ENCODE measurements at regions of chr2 and their contacts with region 1.

Region 1: DNA sequence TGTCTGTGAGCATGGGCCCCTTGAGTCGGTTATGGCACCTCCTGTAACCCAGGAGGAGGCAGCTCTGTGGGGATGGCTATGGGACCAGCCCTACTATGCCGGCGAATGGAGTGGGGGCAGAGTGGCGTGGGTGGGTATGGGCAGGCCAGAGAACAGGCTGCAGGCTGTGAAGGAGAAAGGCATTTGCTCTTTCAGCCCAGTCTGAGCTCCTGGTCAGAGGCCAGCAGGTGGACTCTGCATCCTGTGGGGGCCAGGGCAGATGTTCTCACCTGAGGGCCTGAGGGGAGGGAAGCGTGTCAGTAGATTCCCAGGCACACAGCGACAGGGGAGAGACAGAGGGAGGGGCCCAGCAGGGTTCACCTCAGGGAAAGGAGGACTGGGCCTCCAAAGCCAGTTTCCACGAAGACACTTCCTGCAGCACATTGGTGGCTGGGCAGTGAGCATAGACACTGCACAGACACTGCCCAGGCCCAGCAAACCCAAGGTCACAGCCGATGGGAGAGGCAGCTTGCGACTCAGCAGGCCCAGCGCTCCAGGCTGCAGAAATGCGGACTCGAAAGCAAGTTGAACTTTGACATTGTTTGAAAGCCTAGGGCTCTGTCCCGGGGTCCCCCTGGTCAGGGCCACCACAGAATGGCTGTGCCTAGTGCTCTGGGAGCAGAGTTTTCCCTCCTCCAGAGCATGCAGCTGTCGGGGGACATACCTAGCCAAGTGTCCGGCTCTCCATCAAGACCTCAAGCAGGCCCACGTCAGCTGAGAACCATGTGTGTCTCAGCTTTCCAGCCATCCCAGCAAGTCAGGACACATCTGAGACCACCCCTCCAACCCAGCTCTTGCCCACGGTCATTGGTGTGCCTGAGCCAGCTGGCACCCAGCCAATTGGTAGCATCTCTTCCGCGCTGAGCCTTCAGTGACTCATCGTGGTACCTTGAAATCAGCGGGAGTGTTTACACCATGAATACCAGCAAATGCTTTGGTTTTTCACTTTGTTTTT is 53.8 kb downstream of the TGOLN2 start:
- DNase-seq: peak; percentile 96
- H3K4me3 ChIP-seq: no peak overlapping the region
- H3K27ac ChIP-seq: peak overlapping the region; percentile 23
- H3K4me1 ChIP-seq: peaks cover 49% of the 10 kb centered on the region
- H3K27me3 ChIP-seq: no peaks in the 10 kb centered on the region
- CTCF ChIP-seq: no peak

Region 2: DNA sequence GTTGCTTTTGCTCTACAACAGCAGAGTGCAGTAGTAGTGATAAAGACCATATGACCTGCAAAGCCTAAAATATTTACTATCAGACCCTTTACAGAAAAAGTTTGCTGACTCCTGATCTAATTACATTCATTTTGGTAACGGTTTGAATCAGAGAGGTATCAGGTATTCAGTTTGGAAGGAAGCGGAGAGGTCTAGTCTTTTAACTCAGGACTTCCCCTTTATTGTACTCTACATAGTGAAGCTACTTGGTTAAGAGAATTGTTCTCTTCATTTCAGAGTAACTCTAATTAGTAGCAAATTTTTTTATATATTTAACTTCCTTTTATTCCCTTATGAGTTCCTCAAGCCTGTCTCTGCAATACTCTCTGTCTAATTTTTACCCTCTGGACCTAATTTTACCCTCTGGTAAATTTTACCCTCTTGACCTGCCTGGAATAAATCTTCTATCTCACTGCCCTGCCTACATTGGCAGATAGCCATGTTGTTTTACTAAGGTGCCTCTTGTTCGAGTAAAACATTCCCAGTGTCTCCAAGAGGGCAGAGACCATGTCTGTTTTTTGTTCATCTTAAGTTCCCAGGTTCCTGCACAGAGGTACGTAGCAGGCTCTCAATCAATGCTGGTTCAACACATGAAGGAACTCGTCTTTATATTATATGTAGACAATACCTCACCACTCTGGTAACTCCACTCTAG is 587.1 kb before region 1 on chr2:
- CTCF ChIA-PET with region 1: no interaction called
- dilution Hi-C with region 1: no loop called
- in situ Hi-C with region 1: no loop called
- intact Hi-C with region 1: no loop called
- DNase-seq: no peak
- H3K4me3 ChIP-seq: no peak overlapping the region
- H3K27ac ChIP-seq: no peak overlapping the region
- H3K4me1 ChIP-seq: no peaks in the 10 kb centered on the region
- H3K27me3 ChIP-seq: peaks cover 5% of the 10 kb centered on the region
- CTCF ChIP-seq: no peak

Region 3: GRCh38 chr2:85066874-85067351 is 207.1 kb before region 1 on chr2:
- CTCF ChIA-PET with region 1: no interaction called
- dilution Hi-C with region 1: loop called (anchors 25 kb)
- in situ Hi-C with region 1: no loop called
- intact Hi-C with region 1: no loop called
- DNase-seq: peak; percentile 40
- H3K4me3 ChIP-seq: no peak overlapping the region
- H3K27ac ChIP-seq: no peak overlapping the region
- H3K4me1 ChIP-seq: peaks cover 5% of the 10 kb centered on the region
- H3K27me3 ChIP-seq: no peaks in the 10 kb centered on the region
- CTCF ChIP-seq: peak; percentile 74 to 88

Region 4: GRCh38 chr2:85095094-85095493 is 178.9 kb before region 1 on chr2:
- CTCF ChIA-PET with region 1: interaction called, 17 read pairs
- dilution Hi-C with region 1: no loop called
- in situ Hi-C with region 1: no loop called
- intact Hi-C with region 1: no loop called
- DNase-seq: no peak
- H3K4me3 ChIP-seq: no peak overlapping the region
- H3K27ac ChIP-seq: no peak overlapping the region
- H3K4me1 ChIP-seq: no peaks in the 10 kb centered on the region
- H3K27me3 ChIP-seq: no peaks in the 10 kb centered on the region
- CTCF ChIP-seq: no peak

Region 5: DNA sequence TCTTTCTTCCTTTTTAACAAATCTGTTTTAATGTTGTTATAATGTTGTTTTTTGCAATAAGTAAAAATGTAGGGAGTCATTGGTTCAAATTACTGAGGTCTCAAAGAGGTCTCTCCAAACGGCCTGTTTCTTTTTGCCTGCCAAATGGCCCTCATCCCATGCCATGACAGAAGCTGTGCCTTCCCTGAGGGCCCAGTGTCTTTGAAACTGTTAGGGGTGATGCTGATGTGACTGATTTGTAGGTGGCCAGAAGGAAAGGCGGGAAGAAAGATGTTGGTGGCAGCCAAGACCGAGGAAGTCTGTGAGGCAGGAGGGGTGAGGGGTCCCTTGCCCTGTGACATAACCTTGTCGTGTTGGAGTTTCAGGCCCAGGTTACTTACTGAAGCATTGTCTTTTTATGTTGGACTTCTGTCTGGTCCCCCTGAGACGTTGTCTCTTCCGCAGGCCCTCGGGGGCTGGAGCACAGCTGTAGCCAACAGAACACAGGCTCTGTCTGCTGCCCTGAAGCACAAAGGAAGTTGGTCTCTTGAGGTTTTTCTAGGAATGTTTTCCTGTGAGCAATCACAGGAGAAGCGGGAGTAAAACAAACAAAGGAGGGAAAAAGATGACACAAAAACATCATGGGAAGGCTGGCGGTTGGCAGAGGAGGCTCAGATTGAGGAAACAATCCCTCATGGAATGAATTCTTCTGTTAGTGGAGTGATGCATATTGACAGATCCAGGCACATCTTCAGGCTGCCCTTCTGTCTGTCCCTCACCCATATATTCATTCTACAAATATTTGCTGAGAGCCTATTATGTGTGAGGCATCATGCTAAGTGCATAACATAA is 619.6 kb after region 1 on chr2:
- CTCF ChIA-PET with region 1: no interaction called
- dilution Hi-C with region 1: no loop called
- in situ Hi-C with region 1: no loop called
- intact Hi-C with region 1: no loop called
- DNase-seq: peak; percentile 77
- H3K4me3 ChIP-seq: no peak overlapping the region
- H3K27ac ChIP-seq: peak overlapping the region; percentile 98
- H3K4me1 ChIP-seq: peaks cover 41% of the 10 kb centered on the region
- H3K27me3 ChIP-seq: no peaks in the 10 kb centered on the region
- CTCF ChIP-seq: no peak